GM12878 (cell line): ENCODE measurements at regions of chr12 and their contacts with region 1.

Region 1: DNA sequence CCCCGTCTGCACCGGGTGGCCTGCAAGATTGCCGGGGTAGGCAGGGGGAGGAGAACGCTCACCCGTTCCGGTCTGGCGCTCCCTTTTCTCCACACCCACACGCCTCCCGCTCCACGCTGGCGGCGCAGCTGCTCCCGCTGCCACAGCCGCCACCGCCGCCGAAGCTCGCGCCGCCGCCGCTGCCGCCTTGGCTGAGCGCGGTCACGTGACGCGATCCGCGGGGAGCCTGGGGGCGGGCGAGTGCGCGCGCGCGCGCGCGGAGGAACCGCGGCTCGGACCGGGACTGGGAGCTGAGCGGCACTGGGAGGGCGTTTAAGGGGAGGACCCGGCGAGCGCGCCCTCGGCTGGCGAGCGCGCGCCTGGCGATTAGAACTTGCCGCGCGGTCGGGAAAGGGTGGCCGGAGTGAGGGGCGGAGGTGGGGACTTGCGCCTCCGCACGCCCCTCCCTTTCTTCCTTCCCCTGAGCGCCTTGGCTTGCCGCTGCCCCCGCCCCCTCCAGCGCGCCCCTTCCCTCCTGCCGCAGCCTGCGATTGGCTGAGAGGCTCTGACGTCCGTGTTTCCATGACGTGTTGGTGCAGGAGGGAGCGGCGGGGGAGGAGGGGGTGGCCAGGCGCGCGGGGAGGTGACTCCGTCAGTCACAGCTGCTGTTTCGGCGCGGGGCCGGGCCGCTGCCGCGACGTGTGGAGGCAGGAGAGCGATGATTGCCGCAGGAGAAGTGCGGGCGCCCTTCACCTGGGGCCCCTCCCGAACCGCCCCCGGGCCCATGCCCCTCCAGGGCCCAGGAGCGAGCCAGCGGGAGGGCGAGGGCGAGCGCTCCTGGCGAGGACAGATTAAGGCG is 738 bp upstream of the ATP2B1 start:
- DNase-seq: peak; percentile 95
- ATAC-seq: peak; percentile 76
- H3K4me3 ChIP-seq: peak overlapping the region; percentile 94
- H3K27ac ChIP-seq: peak overlapping the region; percentile 95
- H3K4me1 ChIP-seq: peaks cover 3% of the 10 kb centered on the region; the same call in 1 of the 2 replicates
- H3K27me3 ChIP-seq: no peaks in the 10 kb centered on the region
- CTCF ChIP-seq: 0 out of 6 replicates have a peak, but pooled peaks of 1 of the 3 experiments have one; percentile 10
- EP300 ChIP-seq: peak in 1 of 2 experiments; percentile 41; a peak in 3 of 4 replicates
- POLR2A ChIP-seq: peak; percentile 96
- RAD21 ChIP-seq: 0 out of 2 replicates have a peak, but pooled peaks have one; percentile 0

Region 2: GRCh38 chr12:88600272-88600671 is 1109.1 kb before region 1 on chr12:
- CTCF ChIA-PET with region 1: no interaction called
- POLR2A ChIA-PET with region 1: no interaction called
- RAD21 ChIA-PET with region 1: no interaction called
- SMC1A ChIA-PET with region 1: no interaction called
- in situ Hi-C with region 1: no loop called
- intact Hi-C with region 1: no loop called
- DNase-seq: no peak
- ATAC-seq: no peak
- H3K4me3 ChIP-seq: no peak overlapping the region
- H3K27ac ChIP-seq: no peak overlapping the region
- H3K4me1 ChIP-seq: no peaks in the 10 kb centered on the region
- H3K27me3 ChIP-seq: no peaks in the 10 kb centered on the region
- CTCF ChIP-seq: no peak
- EP300 ChIP-seq: no peak
- POLR2A ChIP-seq: no peak
- RAD21 ChIP-seq: no peak

Region 3: DNA sequence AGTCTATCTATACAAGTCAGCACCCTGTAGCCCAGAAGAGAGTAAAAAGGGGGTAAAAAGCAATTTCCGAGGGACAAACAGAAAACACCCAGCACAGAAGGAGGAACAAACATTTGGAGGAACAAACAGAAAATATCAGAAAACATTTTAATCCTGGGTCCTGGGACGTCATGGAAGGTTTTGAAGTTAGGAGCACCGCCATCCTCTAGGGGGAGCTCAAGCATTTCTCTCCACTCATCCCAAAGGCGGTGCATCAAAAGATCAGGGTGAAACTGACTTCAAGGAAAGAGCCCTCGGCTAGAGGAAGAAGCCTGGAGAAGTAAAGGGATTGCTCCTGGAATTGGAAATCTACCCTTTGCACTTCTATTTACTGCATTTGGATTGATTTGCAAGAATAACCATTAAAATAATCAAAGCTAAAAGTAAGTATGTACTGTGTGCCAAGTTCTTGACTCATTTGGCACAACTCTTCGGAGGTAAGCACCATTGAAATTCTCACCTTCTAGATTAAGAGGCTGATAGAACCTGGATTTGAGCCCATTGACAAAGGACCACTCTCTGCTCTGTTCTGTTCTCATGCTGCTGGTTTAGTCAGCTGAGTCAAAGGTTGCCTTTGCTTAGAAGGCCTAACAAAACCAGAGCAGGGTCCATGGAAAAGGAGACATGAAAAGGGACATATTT is 166.3 kb before region 1 on chr12:
- CTCF ChIA-PET with region 1: interaction called, 6 read pairs
- POLR2A ChIA-PET with region 1: no interaction called
- RAD21 ChIA-PET with region 1: interaction called, 7 read pairs
- SMC1A ChIA-PET with region 1: interaction called, 18 read pairs
- in situ Hi-C with region 1: no loop called
- intact Hi-C with region 1: loop called (anchors 5 kb)
- DNase-seq: peak; percentile 38
- ATAC-seq: peak; percentile 94
- H3K4me3 ChIP-seq: no peak overlapping the region
- H3K27ac ChIP-seq: no peak overlapping the region
- H3K4me1 ChIP-seq: peaks cover 4% of the 10 kb centered on the region; the same call in 1 of the 2 replicates
- H3K27me3 ChIP-seq: no peaks in the 10 kb centered on the region
- CTCF ChIP-seq: peak; percentile 86 to 91 (median 89)
- EP300 ChIP-seq: no peak
- POLR2A ChIP-seq: no peak
- RAD21 ChIP-seq: peak; percentile 99

Region 4: DNA sequence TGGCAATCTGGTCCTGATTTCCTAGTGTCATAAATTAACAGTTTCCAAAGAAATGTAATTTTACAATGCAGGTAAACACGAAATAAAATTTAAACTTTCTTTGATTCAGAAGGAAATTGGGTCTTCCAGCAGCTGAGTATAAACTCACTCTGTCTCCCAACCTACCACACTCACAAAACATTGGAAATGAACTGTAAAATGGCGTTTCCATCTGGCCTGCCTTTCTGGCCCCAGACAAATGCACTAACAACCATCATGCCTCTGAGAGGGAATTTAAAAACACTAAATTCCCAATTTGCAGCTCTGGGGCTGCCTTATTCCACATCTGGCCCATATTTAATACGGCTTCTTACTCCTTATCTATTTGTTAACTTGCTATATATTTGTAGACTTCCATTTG is 20.1 kb before region 1 on chr12:
- CTCF ChIA-PET with region 1: interaction called, 7 read pairs
- POLR2A ChIA-PET with region 1: interaction called, 12 read pairs
- RAD21 ChIA-PET with region 1: interaction called, 9 read pairs
- SMC1A ChIA-PET with region 1: interaction called, 31 read pairs
- in situ Hi-C with region 1: no loop called
- intact Hi-C with region 1: no loop called
- DNase-seq: no peak
- ATAC-seq: no peak
- H3K4me3 ChIP-seq: no peak overlapping the region
- H3K27ac ChIP-seq: no peak overlapping the region
- H3K4me1 ChIP-seq: peaks cover 3% of the 10 kb centered on the region; the same call in 1 of the 2 replicates
- H3K27me3 ChIP-seq: no peaks in the 10 kb centered on the region
- CTCF ChIP-seq: no peak
- EP300 ChIP-seq: no peak
- POLR2A ChIP-seq: no peak
- RAD21 ChIP-seq: no peak

Region 5: GRCh38 chr12:89765959-89766824 is 56.8 kb after region 1 on chr12:
- CTCF ChIA-PET with region 1: interaction called, 4 read pairs
- POLR2A ChIA-PET with region 1: interaction called, 13 read pairs
- RAD21 ChIA-PET with region 1: interaction called, 41 read pairs
- SMC1A ChIA-PET with region 1: interaction called, 22 read pairs
- in situ Hi-C with region 1: no loop called
- intact Hi-C with region 1: no loop called
- DNase-seq: no peak
- ATAC-seq: peak; percentile 85
- H3K4me3 ChIP-seq: no peak overlapping the region
- H3K27ac ChIP-seq: peak overlapping the region; percentile 79
- H3K4me1 ChIP-seq: peaks cover 21% of the 10 kb centered on the region
- H3K27me3 ChIP-seq: no peaks in the 10 kb centered on the region
- CTCF ChIP-seq: no peak
- EP300 ChIP-seq: peak; percentile 81 to 91
- POLR2A ChIP-seq: no peak
- RAD21 ChIP-seq: 0 out of 2 replicates have a peak, but pooled peaks have one; percentile 7

Region 6: DNA sequence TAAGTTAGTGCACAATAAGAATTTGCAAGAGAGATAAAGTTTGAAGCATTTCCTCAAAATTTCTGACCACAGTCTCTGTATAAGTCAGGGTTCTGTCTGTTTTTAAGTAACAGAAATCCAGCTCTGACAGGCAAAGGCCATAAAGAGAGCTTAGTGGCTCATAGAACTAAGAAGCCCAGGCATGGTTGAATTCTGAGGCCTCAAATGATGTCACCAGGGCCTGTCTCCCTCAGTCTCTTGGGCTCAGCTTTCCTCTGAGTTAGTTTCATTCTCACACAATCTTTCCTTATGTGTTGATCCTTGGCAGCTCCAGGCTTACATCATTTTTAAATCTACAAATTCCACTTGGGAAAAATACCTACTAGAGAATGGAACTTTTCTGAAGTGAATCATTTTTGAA is 172.7 kb after region 1 on chr12:
- CTCF ChIA-PET with region 1: interaction called, 5 read pairs
- POLR2A ChIA-PET with region 1: interaction called, 12 read pairs
- RAD21 ChIA-PET with region 1: interaction called, 9 read pairs
- SMC1A ChIA-PET with region 1: interaction called, 6 read pairs
- in situ Hi-C with region 1: no loop called
- intact Hi-C with region 1: loop called (anchors 2 kb)
- DNase-seq: peak; percentile 55
- ATAC-seq: peak; percentile 80
- H3K4me3 ChIP-seq: no peak overlapping the region
- H3K27ac ChIP-seq: peak overlapping the region; percentile 99
- H3K4me1 ChIP-seq: peaks cover 40% of the 10 kb centered on the region
- H3K27me3 ChIP-seq: no peaks in the 10 kb centered on the region
- CTCF ChIP-seq: no peak
- EP300 ChIP-seq: peak; percentile 60 to 64; a peak in 2 of 4 replicates
- POLR2A ChIP-seq: no peak
- RAD21 ChIP-seq: peak; percentile 20; the same call in 1 of the 2 replicates

Region 7: GRCh38 chr12:89960011-89960507 is 250.7 kb after region 1 on chr12:
- CTCF ChIA-PET with region 1: interaction called, 9 read pairs
- POLR2A ChIA-PET with region 1: interaction called, 8 read pairs
- RAD21 ChIA-PET with region 1: interaction called, 28 read pairs
- SMC1A ChIA-PET with region 1: interaction called, 6 read pairs
- in situ Hi-C with region 1: no loop called
- intact Hi-C with region 1: loop called (anchors 2 kb)
- DNase-seq: peak; percentile 68
- ATAC-seq: peak; percentile 90
- H3K4me3 ChIP-seq: peak overlapping the region; percentile 65; the same call in 1 of the 2 replicates
- H3K27ac ChIP-seq: peak overlapping the region; percentile 71
- H3K4me1 ChIP-seq: peaks cover 9% of the 10 kb centered on the region
- H3K27me3 ChIP-seq: no peaks in the 10 kb centered on the region
- CTCF ChIP-seq: no peak
- EP300 ChIP-seq: peak in 1 of 2 experiments; percentile 55; a peak in 1 of 4 replicates
- POLR2A ChIP-seq: no peak
- RAD21 ChIP-seq: no peak

Region 8: DNA sequence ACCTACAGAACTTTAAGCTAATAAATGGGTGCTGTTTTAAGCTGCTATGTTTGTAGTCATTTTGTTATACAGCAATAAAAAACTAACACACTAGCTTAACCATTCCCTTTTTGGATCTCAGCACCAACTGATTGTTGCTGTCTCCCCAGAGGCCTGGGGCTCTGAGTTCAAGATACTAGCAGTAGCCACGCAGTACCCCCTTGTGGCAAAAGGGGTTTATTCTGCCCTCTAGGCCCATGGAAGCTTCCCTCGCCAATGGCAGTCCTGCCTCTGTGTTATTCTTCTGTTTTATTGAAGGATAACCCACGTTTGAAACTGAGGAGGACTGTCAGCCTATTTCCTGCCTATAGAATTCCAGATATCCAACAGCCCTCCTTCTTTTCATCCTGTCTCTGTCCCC is 454.6 kb after region 1 on chr12:
- CTCF ChIA-PET with region 1: no interaction called
- POLR2A ChIA-PET with region 1: no interaction called
- RAD21 ChIA-PET with region 1: no interaction called
- SMC1A ChIA-PET with region 1: no interaction called
- in situ Hi-C with region 1: no loop called
- intact Hi-C with region 1: loop called (anchors 5 kb)
- DNase-seq: no peak
- ATAC-seq: peak; percentile 81
- H3K4me3 ChIP-seq: no peak overlapping the region
- H3K27ac ChIP-seq: no peak overlapping the region
- H3K4me1 ChIP-seq: no peaks in the 10 kb centered on the region
- H3K27me3 ChIP-seq: no peaks in the 10 kb centered on the region
- CTCF ChIP-seq: peak in 2 of 3 experiments; percentile 23 to 24; a peak in 2 of 6 replicates
- EP300 ChIP-seq: no peak
- POLR2A ChIP-seq: no peak
- RAD21 ChIP-seq: peak; percentile 36; the same call in 1 of the 2 replicates

Region 9: GRCh38 chr12:90428465-90428864 is 719.1 kb after region 1 on chr12:
- CTCF ChIA-PET with region 1: no interaction called
- POLR2A ChIA-PET with region 1: no interaction called
- RAD21 ChIA-PET with region 1: no interaction called
- SMC1A ChIA-PET with region 1: no interaction called
- in situ Hi-C with region 1: no loop called
- intact Hi-C with region 1: no loop called
- DNase-seq: no peak
- ATAC-seq: no peak
- H3K4me3 ChIP-seq: no peak overlapping the region
- H3K27ac ChIP-seq: no peak overlapping the region
- H3K4me1 ChIP-seq: no peaks in the 10 kb centered on the region
- H3K27me3 ChIP-seq: no peaks in the 10 kb centered on the region
- CTCF ChIP-seq: no peak
- EP300 ChIP-seq: no peak
- POLR2A ChIP-seq: no peak
- RAD21 ChIP-seq: no peak